ENCODE measurements at regions of chr9 and their contacts with region 1.

Region 1: DNA sequence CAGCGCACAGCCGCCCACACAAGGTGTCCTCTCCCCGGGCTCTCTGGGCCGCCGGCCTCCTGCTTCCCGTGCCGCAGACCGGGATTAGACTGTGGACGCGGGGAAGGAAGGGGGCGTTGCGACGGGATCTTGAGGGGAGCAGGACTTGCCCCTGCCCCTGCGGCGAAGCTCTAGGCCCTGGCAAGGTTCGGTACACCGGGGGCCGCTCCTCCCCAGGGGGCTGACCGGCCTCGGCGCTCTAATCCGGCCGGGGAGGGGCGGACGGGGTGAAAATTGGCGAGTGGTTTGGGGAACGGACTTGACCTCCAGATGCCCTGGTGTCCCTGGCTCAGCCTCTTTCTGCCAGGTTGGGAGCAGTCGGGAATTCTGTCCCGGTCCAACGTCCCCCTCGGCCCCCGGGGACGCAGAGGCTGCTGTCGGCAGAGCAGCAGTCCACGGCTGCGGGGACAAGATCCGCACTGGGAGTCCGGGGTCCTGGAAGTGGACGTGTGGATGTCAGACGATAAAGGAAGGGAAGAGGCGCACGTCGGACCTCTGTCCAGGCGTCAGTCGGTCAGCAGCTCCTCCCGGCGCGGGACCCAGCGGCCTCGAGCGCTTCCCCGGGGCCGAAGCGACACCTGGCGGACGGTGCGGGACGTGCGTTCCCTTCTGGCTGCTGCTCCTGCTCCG is 1.9 kb upstream of the CNTFR start:
- DNase-seq: no peak
- H3K4me3 ChIP-seq: no peak overlapping the region
- H3K27me3 ChIP-seq: peaks cover 54% of the 10 kb centered on the region
- CTCF ChIP-seq: peak; percentile 93

Region 2: DNA sequence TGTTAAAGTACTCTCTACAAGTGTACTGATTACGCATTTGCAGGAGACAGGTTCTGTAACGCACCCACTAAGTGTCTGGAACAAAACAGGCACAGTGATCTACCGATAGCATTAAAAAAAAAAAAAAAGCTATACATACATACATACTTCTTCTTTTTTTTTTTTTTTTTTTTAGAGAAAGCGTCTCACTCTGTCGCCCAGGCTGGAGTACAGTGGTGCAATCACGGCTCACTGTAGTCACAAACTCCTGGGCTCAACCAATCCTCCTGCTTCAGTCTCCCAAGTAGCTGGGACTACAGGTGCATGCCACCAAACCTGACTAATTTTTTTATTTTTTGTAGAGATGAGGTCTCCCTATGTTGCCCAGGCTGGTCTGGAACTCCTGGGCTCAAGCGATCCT is 269.9 kb before region 1 on chr9:
- CTCF ChIA-PET with region 1: no interaction called
- POLR2A ChIA-PET with region 1: no interaction called
- DNase-seq: no peak
- H3K4me3 ChIP-seq: no peak overlapping the region
- H3K27me3 ChIP-seq: no peaks in the 10 kb centered on the region
- CTCF ChIP-seq: no peak

Region 3: DNA sequence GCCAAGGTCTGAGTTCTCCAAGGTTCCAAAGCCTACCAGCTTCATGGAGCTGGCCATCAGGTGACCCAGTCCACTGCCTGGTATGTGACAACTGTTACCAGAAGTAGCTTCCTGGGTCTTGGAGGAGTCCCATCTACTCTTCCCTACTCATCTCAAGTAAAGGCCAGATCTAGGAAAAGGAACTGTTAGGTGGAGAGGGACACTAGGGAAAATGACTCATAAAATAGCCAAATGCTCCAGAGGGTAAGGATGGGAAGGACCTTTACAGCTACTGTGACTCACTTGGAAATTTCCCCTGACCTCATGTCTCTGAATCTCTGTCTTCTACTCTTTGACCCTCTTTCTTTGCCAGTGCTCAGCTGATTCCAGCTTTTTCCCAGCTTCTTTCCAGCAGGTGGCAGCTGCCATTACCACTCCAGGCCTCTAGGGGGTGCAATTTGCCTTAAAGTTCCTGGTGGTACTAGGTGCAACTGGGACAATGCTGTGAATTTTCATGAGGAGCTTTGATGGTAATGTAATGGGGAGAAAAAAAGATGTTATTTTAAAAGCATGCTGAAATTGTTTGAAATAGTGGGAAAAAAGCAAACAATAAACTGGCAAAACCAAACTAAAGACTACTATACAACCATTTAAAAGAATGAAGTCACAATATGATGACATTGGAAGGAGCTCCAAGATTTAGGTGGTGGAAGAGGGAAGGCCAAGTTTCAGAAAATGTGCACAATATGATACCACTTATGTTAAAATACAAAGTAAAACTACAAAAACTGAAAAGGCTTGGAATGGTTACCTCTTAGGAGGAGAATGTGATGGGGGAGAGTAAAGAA is 187.6 kb before region 1 on chr9:
- CTCF ChIA-PET with region 1: interaction called, 26 read pairs
- POLR2A ChIA-PET with region 1: no interaction called
- DNase-seq: no peak
- H3K4me3 ChIP-seq: no peak overlapping the region
- H3K27me3 ChIP-seq: no peaks in the 10 kb centered on the region
- CTCF ChIP-seq: peak; percentile 98

Region 4: GRCh38 chr9:34479431-34479866 is 111.9 kb before region 1 on chr9:
- CTCF ChIA-PET with region 1: no interaction called
- POLR2A ChIA-PET with region 1: no interaction called
- DNase-seq: no peak
- H3K4me3 ChIP-seq: no peak overlapping the region
- H3K27me3 ChIP-seq: peaks cover 12% of the 10 kb centered on the region
- CTCF ChIP-seq: no peak

Region 5: DNA sequence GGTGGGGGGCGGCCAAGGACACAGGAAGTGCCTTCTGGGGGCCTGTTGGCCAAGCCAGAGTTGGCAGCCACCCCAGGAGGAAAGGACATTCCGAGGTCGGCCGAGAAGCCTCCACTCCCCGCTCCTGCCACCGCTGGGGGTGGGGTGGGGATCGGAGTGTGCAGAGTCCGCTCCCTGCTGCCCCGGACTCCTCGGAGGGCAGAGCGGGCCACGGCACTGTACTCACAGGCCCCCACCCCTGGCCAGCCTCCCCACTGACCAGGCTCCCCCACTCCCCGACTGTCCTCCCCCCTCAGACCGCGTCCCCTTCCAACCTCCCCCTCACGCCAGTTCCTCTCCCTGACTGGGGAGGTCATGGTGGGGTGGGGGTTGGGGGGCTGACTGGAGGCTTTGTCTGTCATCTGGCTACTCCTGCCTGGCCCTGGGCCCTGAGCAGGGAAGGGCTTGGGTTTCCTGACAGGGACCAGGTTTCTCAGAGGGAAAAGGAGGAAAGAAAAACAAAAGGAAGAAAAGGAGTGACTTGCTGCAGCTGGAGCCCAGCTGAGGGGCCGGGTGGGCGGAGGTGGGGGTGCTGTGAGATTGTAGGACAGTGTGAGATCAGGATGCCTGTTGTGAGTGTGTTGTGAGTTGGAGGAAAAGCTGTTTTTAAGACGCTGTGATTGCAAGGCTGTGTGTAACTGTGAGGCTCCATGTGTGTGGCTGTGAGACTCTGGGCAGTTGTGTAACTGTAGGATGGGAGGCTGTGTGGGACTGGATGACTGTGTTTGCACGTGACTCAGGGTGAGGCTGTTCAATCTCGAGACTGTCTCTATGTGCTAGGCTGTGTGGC is 31.5 kb before region 1 on chr9:
- CTCF ChIA-PET with region 1: interaction called, 23 read pairs
- POLR2A ChIA-PET with region 1: no interaction called
- DNase-seq: no peak
- H3K4me3 ChIP-seq: no peak overlapping the region
- H3K27me3 ChIP-seq: peaks cover 3% of the 10 kb centered on the region
- CTCF ChIP-seq: no peak

Region 6: DNA sequence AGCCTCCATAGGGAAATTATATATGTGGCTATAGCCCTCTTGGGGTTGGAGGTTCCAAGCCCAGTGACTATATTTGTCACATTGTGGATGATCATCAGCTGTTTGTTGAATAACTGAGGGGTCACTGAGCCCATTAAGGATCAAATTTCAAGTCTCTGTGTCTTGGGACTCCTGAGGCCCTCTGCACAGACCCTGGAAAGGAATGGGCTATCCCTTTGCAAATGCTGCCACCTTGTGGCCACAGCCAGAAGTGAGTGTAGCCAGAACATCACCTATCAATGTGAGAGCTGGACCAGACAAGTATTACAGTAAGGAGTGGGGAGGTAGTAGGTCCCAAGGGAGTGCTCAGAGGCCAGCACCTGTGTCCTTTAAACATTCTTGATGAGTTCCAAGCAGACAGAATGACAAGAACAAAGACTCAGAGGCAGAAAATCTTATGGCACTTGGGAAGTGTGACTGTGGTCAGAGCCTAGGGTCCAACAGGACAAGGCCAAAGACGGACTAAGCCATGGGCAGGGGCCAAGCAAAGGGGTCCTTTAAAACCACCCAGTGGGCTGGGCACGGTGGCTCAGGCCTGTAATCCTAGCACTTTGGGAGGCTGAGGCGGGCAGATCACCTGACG is 12.3 kb after region 1 on chr9:
- CTCF ChIA-PET with region 1: interaction called, 40 read pairs
- POLR2A ChIA-PET with region 1: no interaction called
- DNase-seq: no peak
- H3K4me3 ChIP-seq: no peak overlapping the region
- H3K27me3 ChIP-seq: peaks cover 4% of the 10 kb centered on the region
- CTCF ChIP-seq: peak; percentile 88

Region 7: DNA sequence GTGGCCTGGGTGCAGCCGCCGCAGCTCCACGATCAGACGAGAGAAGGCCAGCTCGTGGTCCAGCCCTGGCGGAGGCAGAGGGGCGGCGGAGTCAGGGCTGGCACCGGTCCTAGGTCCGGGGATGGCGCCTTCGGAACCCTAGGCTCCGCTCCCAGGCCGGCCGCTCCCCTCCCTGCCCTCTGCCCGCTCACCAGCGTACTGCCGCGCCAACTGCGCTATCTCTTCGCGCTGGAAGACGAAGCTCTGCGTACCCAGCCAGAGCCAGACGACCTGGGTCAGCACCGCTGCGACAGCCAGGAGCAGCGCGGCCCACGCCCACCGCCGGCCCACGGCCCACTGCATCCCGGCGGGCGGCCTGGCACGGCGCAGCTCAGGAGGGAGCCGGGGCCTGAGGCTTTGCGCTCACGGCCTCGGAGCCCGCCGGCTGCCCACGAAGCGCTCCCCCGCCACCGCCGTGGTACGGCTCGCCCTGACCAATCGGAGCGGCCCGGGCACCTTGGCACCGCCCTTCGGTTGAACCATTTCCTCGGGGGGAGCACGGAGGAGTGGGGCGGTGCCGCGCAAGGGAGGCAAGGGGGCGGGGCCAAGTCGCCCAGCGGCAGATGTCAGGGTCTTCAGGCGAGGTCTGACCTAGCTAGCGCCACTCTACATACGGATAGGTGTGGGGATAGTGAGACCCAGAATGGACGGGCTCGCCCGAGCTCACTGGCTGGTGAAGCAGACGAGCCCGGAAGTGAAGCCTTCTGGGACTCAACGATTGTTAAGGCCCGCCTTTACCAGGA is 46.2 kb after region 1 on chr9 and contains the start of gene SIGMAR1:
- CTCF ChIA-PET with region 1: interaction called, 12 read pairs
- POLR2A ChIA-PET with region 1: no interaction called
- DNase-seq: no peak
- H3K4me3 ChIP-seq: peak within 1 kb of the TSS; percentile 78
- H3K27me3 ChIP-seq: no peaks in the 10 kb centered on the region
- CTCF ChIP-seq: no peak
- polyA plus RNA-seq, gene SIGMAR1: 65.4 and 95.5 TPM in 2 replicates

Region 8: DNA sequence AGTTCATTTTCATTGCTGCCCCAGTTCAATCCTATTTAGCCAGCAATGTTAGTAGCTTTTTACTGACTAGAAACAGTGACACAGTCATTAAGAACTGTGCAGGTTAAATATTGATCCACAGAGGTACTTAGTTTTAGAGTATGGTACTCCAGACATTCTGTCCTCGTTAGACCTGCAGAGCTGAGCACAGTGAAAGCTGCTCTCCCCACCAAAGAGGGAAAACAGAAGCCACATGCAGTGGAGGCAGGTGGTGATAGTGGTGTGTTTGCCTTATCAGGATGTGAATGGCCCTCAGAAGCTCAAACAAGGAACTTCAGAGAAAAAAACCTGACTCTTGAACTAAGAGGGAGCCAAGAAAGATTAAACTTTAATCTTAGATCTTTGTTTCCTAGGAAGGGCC is 645.9 kb after region 1 on chr9:
- CTCF ChIA-PET with region 1: no interaction called
- POLR2A ChIA-PET with region 1: no interaction called
- DNase-seq: no peak
- H3K4me3 ChIP-seq: no peak overlapping the region
- H3K27me3 ChIP-seq: no peaks in the 10 kb centered on the region
- CTCF ChIP-seq: no peak